PC-3 (cell line): ENCODE measurements at regions of chr1 and their contacts with region 1.

Region 1: DNA sequence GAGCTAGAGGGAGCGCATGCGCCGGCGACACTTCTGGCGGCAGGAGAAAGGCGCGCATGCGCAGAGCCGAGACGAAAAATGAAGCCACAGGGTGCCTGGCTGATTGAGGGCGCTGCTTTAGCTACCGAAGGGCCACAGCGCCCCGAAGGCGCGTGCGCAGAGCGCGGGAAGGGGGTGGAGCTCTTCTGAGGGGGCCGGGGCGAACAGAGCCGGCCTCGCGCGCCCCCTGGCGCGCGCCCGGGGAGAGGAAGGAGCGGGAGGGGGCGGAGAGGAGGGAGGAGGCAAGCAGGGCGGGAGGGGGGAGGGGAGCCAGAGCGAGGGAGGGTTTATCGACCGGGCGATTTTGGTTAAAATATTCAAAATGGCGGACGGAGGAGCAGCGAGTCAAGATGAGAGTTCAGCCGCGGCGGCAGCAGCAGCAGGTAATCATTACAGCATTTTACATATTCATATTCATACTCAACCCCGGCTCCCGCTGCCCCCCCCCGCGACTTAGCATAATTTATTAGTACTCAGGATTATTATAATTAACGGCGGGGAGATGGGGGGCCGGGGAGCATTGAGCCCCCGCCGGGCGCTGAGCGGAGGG is at the start of gene POU2F1:
- DNase-seq: peak; percentile 100
- ATAC-seq: peak; percentile 76
- H3K4me3 ChIP-seq: peak within 1 kb of the TSS; percentile 94
- H3K27ac ChIP-seq: peak within 1 kb of the TSS; percentile 97
- H3K4me1 ChIP-seq: peaks cover 28% of the 10 kb centered on the region
- H3K27me3 ChIP-seq: no peaks in the 10 kb centered on the region
- CTCF ChIP-seq: peak; percentile 69
- total RNA-seq, gene POU2F1: 8.7 and 17.9 TPM in 2 replicates

Region 2: GRCh38 chr1:166875734-166876539 is 344.7 kb before region 1 on chr1 and contains the start of gene TADA1:
- CTCF ChIA-PET with region 1: no interaction called
- POLR2A ChIA-PET with region 1: no interaction called
- intact Hi-C with region 1: loop called (anchors 2 kb)
- DNase-seq: peak; percentile 99
- ATAC-seq: peak; percentile 87
- H3K4me3 ChIP-seq: peak within 1 kb of the TSS; percentile 73
- H3K27ac ChIP-seq: peak within 1 kb of the TSS; percentile 78
- H3K4me1 ChIP-seq: 0 out of 2 replicates have a peak, but pooled peaks cover 23% of the 10 kb centered on the region
- H3K27me3 ChIP-seq: no peaks in the 10 kb centered on the region
- CTCF ChIP-seq: no peak
- total RNA-seq, gene TADA1: 12.4 and 15.3 TPM in 2 replicates

Region 3: DNA sequence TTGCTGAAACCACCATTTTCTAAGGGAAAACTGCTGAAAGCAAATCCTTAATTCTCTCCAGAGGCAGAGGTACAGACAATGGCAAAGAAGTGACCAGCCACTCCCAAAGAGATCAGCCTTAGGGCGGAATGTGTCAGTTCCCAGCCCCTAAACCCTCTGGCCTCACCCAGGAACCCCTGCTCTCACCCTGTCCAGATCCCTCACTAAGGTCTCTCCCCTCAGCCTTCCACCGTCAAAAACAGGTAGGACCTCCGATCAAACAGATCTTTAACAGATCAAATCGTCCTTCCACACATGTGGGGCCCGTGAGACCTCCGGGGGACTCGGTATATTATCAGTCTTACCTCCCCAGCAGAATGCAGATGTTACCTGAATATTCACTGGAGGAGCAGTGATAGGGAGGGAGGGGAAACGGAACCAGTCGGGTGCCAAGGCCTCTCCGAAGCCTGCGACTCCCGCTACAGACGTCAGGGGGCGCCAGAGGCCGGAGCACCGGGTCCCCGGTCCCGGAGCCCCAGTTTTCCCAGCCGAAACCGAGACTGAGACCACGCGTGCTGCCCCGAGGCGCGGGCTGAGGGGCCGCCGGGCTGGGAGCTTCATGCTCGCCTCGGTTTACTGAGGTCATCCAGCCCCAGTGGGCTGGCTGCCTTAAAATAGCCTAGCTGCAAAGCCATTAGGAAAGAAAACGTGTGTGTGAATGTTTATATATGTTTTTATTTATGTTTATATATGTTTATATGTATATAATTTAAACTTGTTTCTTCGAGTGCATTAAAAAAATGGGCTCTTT is 154.1 kb before region 1 on chr1:
- CTCF ChIA-PET with region 1: interaction called, 15 read pairs
- POLR2A ChIA-PET with region 1: no interaction called
- intact Hi-C with region 1: loop called (anchors 1 kb)
- DNase-seq: peak; percentile 87
- ATAC-seq: peak; percentile 97
- H3K4me3 ChIP-seq: peak overlapping the region; percentile 64
- H3K27ac ChIP-seq: no peak overlapping the region
- H3K4me1 ChIP-seq: no peaks in the 10 kb centered on the region
- H3K27me3 ChIP-seq: no peaks in the 10 kb centered on the region
- CTCF ChIP-seq: peak; percentile 98

Region 4: DNA sequence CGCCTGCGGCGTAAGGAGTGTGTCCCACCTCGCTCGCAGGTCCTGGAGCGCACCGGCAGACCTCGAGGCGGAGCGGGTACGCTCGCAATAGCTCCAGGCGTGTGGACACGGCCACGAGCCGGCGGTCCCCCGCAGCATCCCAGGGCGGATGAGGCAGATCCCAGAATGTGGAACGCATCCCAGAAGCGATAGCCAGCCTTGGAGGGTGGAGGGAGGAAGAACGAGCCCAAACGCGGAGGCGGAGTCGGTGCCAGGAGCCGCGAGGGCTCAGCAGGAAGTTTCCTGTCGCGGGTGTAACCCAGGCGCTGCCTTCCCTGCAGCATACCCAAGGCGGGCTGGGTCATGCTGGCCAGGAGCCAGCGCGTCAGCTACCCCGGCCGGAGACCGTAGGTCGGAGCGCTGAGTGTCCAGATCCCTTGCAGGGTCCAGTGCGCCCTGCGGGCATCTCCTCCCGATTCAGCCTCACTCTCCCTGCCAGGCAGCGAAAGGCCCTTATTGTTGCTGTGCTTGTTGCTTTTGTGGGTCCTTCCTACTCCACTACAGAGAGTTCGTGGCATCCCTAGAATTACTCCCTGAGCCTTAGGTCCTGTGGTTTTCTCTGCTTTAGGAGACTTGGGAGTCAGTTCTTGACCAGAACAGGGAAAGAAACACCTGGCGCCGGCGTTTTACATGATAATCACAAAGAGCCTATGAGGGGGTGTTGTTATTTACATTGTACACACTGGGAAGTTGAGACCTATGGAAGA is 99.1 kb before region 1 on chr1:
- CTCF ChIA-PET with region 1: interaction called, 6 read pairs
- POLR2A ChIA-PET with region 1: no interaction called
- intact Hi-C with region 1: loop called (anchors 5 kb)
- DNase-seq: peak; percentile 66
- ATAC-seq: peak; percentile 63
- H3K4me3 ChIP-seq: peak overlapping the region; percentile 68
- H3K27ac ChIP-seq: no peak overlapping the region
- H3K4me1 ChIP-seq: no peaks in the 10 kb centered on the region
- H3K27me3 ChIP-seq: no peaks in the 10 kb centered on the region
- CTCF ChIP-seq: no peak

Region 5: GRCh38 chr1:167171286-167171929 is 49.2 kb before region 1 on chr1:
- CTCF ChIA-PET with region 1: no interaction called
- POLR2A ChIA-PET with region 1: no interaction called
- intact Hi-C with region 1: no loop called
- DNase-seq: peak; percentile 44
- ATAC-seq: peak; percentile 64; the same call in 1 of the 2 replicates
- H3K4me3 ChIP-seq: no peak overlapping the region
- H3K27ac ChIP-seq: no peak overlapping the region
- H3K4me1 ChIP-seq: peaks cover 27% of the 10 kb centered on the region
- H3K27me3 ChIP-seq: no peaks in the 10 kb centered on the region
- CTCF ChIP-seq: no peak

Region 6: DNA sequence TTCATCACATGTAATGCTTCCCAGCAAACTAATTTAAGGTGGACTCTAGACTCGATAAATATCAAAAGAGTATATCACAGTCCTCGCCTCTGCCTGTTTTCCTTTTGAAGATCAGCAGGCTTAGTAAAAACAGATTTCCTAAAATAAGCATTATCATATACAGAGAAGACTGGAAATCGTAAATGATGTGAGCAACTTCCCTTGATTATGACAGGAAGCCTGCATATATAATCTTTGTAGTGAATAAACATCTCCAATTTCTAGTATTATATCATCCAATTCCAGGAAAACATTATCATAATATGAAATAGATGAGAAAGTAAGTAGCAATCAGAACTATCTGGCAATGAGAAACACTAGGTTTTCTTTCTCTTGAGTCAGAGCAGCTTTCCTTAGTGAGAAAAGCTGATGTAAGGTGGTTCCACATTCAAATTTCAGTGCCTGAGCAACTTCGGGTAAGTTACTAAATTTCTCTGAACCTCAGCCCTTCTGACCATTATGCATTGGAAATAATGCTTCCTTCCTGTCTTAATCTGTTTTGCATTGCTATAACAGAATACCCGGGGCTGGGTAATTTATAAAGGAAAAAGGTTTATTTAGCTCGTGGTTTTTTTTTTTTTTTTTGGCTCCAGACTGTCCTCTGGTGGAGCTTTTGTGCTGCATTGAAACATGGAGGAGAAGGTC is 12.5 kb before region 1 on chr1:
- CTCF ChIA-PET with region 1: interaction called, 21 read pairs
- POLR2A ChIA-PET with region 1: interaction called, 6 read pairs
- intact Hi-C with region 1: no loop called
- DNase-seq: no peak
- ATAC-seq: no peak
- H3K4me3 ChIP-seq: no peak overlapping the region
- H3K27ac ChIP-seq: no peak overlapping the region
- H3K4me1 ChIP-seq: peaks cover 18% of the 10 kb centered on the region
- H3K27me3 ChIP-seq: no peaks in the 10 kb centered on the region
- CTCF ChIP-seq: no peak; the same call in 1 of the 2 replicates

Region 7: DNA sequence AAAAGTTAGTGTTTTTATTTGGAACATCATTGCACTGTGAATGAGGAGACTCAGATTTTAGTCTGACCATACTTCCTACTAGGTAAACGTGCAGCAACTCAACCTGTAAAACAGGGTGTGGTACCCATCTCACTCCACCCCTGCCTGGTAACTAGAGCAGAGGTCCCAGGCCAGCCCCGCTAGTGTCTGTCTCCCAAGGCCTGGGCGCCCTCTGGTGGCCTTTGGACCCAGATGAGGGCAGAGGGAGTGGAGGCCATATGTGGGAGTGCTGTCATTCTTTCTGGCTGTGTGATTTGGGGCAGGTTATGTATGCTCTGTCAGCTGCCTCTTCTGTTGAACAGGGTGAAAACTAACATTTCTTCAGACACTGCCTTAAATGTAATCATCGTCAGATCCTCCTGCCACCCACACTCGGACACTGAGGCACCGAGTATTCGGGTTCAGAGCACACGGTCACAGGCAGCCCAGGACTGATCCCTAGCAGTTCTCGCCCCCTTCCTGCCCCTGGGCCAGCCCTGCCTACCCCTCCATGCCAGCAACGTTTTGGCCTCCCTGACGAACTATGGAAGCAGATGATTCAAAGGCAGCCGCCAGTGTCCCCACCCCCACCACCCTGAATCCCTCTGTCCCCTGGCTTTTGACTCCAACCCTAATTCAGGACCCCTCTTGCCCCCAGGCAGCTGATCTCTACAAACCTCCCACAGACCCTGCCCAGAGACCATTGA is 221.7 kb after region 1 on chr1:
- CTCF ChIA-PET with region 1: interaction called, 4 read pairs
- POLR2A ChIA-PET with region 1: interaction called, 10 read pairs
- intact Hi-C with region 1: loop called (anchors 5 kb)
- DNase-seq: peak; percentile 99
- ATAC-seq: peak; percentile 99
- H3K4me3 ChIP-seq: peak overlapping the region; percentile 25; the same call in 1 of the 2 replicates
- H3K27ac ChIP-seq: peak overlapping the region; percentile 73
- H3K4me1 ChIP-seq: peaks cover 30% of the 10 kb centered on the region
- H3K27me3 ChIP-seq: no peaks in the 10 kb centered on the region
- CTCF ChIP-seq: peak; percentile 99

Region 8: DNA sequence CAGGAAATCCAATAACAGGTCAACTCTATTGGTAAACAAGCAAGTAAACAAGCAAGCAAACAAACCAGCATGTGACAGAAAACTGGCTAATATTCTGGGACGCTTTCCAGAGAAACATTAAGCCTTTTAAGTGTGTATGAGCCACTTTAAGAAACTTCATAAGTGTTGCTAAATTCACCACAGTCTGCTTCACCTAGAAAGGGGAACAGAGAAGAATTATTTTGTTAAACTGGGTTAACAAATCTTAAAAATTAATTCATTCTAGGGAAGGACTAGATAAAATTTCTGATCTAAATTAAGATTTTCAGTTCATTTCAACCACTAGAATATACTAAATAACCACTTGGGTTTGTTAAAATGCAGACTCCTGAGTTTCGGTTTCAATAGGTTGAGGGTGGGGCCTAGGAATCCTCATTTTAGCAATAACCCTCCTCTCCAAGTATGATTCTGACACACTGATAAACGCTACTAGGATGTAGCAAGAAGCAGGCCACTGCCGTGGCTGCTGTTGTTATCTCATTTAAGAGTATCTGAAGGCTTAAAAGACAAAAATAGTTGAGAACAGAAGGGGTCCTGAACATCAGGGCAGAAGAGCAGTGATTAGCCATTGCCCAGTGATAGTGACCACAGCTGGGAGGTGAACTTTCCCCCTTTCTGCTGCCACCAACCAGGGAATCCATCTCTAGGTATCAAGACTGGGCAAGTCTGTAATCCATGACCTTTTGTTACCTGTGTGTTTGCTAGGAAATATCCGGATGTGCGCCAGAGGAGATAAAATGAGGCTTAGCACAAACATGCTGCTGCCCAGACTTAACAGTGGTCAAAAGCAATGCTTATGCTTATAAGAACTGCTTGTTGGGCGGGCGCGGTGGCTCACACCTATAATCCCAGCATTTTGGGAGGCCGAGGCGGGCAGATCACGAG is 321.7 kb after region 1 on chr1:
- CTCF ChIA-PET with region 1: no interaction called
- POLR2A ChIA-PET with region 1: no interaction called
- intact Hi-C with region 1: no loop called
- DNase-seq: no peak
- ATAC-seq: no peak
- H3K4me3 ChIP-seq: no peak overlapping the region
- H3K27ac ChIP-seq: no peak overlapping the region
- H3K4me1 ChIP-seq: peaks cover 12% of the 10 kb centered on the region
- H3K27me3 ChIP-seq: no peaks in the 10 kb centered on the region
- CTCF ChIP-seq: no peak

Region 9: GRCh38 chr1:167936068-167936929 is 715.7 kb after region 1 on chr1 and contains the start of gene DCAF6:
- CTCF ChIA-PET with region 1: no interaction called
- POLR2A ChIA-PET with region 1: no interaction called
- intact Hi-C with region 1: loop called (anchors 5 kb)
- DNase-seq: peak; percentile 100
- ATAC-seq: peak; percentile 71
- H3K4me3 ChIP-seq: peak within 1 kb of the TSS; percentile 79
- H3K27ac ChIP-seq: peak within 1 kb of the TSS; percentile 88
- H3K4me1 ChIP-seq: peaks cover 22% of the 10 kb centered on the region
- H3K27me3 ChIP-seq: no peaks in the 10 kb centered on the region
- CTCF ChIP-seq: no peak
- total RNA-seq, gene DCAF6: 29.1 and 52.2 TPM in 2 replicates